Activated T-helper 1 cell treated with anti-CD3 and anti-CD28 coated beads, Interleukin-12 subunit alpha, Interleukin-12 subunit beta, Interleukin-2, Interleukin-4 antibody, amounts not matched to agents 30 ng/mL and 10 ng/mL and 1 ng/mL, durations not matched to agents 14 hours and 24 hours and 36 hours (primary cell): ENCODE measurements at regions of chr13 and their contacts with region 1.

Region 1: GRCh38 chr13:41456768-41457588 is at the start of gene RGCC:
- DNase-seq: peak; percentile 87
- H3K4me3 Mint-ChIP-seq: peak within 1 kb of the TSS; percentile 95
- H3K27ac Mint-ChIP-seq: peak within 1 kb of the TSS; percentile 96
- H3K4me1 Mint-ChIP-seq: peaks cover 44% of the 10 kb centered on the region
- H3K27me3 Mint-ChIP-seq: peaks cover 22% of the 10 kb centered on the region
- total RNA-seq, gene RGCC: 135 and 139 TPM in 2 replicates

Region 2: GRCh38 chr13:40706439-40706838 is 750.5 kb before region 1 on chr13:
- intact Hi-C with region 1: no loop called
- DNase-seq: no peak
- H3K4me3 Mint-ChIP-seq: no peak overlapping the region
- H3K27ac Mint-ChIP-seq: no peak overlapping the region
- H3K4me1 Mint-ChIP-seq: peaks cover 13% of the 10 kb centered on the region
- H3K27me3 Mint-ChIP-seq: no peaks in the 10 kb centered on the region

Region 3: DNA sequence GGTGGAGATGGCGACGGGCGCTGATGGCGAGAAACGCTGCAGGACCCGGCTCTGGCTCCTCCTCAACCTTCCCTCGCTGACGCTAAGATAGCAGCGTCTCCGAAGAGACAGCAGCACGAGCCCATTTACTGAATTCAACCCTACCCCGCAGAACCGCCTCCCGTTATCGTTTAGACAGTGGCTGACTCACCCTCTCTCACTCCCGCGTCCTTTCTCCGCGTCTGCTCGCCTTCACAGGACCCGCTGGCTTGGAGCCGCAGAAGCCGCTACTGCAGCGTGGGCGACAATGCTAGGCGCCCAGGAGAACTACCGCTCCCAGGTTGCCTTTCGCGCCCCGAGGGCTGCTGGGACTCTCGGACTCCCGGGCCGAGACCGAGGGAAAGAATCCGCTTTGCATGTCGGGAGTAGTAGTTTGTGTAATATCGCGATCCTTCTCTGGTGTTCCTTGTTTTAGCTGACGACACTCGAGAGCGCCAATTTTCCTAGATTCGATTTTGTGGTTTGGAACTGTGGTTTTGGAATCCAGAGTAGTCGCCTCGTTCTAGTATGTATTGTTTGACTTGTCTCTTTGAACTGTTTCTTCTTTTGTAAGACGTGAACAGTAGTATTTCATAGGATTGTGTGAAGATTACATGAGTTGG is 324.3 kb before region 1 on chr13 and contains the start of gene KBTBD6:
- intact Hi-C with region 1: loop called (anchors 5 kb)
- DNase-seq: peak; percentile 92
- H3K4me3 Mint-ChIP-seq: peak within 1 kb of the TSS; percentile 92
- H3K27ac Mint-ChIP-seq: peak within 1 kb of the TSS; percentile 93
- H3K4me1 Mint-ChIP-seq: peaks cover 45% of the 10 kb centered on the region
- H3K27me3 Mint-ChIP-seq: peaks cover 3% of the 10 kb centered on the region
- total RNA-seq, gene KBTBD6: 6.6 and 6.8 TPM in 2 replicates

Region 4: DNA sequence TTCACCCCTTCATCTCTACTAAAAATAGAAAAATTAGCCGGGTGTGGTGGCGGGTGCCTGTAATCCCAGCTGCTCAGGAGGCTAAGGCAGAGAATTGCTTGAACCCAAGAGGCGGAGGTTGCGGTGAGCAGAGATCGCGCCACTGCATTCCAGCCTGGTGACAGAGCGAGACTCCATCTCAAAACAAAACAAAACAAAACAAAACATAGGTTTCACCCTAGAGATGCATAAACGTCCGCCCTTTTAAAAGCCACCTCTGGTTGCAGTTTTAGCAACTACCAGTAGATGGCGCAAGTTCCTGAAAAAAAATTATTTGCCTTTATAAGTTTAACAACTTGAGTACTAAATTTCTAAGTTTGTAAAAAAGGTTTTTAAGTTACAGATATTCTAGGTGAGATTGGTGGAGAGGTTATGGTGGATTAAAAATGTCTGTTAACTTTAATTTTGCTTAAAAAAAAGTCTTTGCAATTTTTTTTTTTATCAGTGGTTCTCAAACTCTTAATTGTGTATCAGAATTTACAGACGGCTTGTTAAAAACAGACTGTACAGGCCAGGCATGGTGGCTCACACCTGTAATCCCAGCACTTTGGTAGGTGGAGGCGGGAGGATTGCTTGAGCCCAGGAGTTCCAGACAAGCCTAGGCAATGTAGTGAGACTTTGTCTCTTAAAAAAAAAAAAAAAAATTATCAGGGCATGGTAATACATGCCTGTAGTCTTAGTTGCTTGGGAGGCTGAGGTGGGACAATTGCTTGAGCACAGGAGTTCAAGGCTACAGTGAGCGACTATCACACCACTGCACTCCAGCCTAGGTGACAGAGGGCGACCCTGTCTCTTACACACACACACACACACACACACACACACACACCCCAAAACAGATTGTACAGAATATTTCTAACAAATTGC is 103.8 kb before region 1 on chr13:
- intact Hi-C with region 1: loop called (anchors 1 kb)
- DNase-seq: peak; percentile 47
- H3K4me3 Mint-ChIP-seq: no peak overlapping the region
- H3K27ac Mint-ChIP-seq: peak overlapping the region; percentile 24
- H3K4me1 Mint-ChIP-seq: peaks cover 38% of the 10 kb centered on the region
- H3K27me3 Mint-ChIP-seq: no peaks in the 10 kb centered on the region

Region 5: GRCh38 chr13:41428155-41428554 is 28.8 kb before region 1 on chr13:
- intact Hi-C with region 1: loop called (anchors 2 kb)
- DNase-seq: no peak
- H3K4me3 Mint-ChIP-seq: no peak overlapping the region
- H3K27ac Mint-ChIP-seq: no peak overlapping the region
- H3K4me1 Mint-ChIP-seq: peaks cover 14% of the 10 kb centered on the region
- H3K27me3 Mint-ChIP-seq: peaks cover 7% of the 10 kb centered on the region

Region 6: GRCh38 chr13:41596190-41596589 is 139.2 kb after region 1 on chr13:
- intact Hi-C with region 1: loop called (anchors 5 kb)
- DNase-seq: no peak
- H3K4me3 Mint-ChIP-seq: no peak overlapping the region
- H3K27ac Mint-ChIP-seq: no peak overlapping the region
- H3K4me1 Mint-ChIP-seq: peaks cover 5% of the 10 kb centered on the region
- H3K27me3 Mint-ChIP-seq: no peaks in the 10 kb centered on the region

Region 7: DNA sequence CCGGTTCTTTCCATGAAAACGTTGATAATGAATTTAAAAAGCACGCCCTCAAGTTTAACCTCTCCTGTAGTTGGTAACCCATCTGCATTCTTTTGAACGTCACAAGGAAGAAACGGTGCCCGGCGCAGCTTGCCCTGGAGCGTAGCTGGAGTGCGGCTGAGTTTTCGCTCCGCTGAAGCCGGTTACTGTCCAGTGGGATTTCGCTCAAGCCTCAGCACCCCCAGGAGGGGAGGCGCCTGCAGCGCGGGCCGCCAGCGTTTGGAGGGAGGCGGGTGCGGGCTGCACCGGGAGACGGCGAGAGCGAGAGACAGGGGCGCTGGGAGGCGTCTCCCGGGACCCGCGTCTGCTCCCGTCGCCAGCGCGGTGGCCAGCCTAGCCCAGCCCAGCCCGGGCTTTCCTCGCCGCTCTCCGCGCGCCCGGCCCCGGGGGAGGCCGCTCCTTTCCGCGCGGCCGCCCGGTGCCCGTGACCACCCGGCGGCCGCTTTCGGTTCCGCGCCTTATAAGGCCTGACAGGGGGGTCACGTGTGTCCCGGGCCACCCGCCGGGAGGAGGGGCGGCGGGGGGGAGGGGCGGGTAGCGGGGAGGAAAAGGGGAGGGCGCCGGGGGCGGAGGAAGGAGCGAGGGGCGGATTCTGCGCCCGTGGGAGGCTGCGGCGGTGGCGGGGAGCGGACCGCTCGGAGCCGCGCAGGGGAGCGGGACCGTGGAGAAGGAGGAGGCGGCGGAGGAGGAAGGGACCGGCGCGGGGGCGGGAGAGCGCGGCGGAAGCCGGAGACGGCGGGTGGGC is 583.2 kb after region 1 on chr13:
- intact Hi-C with region 1: loop called (anchors 2 kb)
- DNase-seq: peak; percentile 80
- H3K4me3 Mint-ChIP-seq: peak overlapping the region; percentile 87
- H3K27ac Mint-ChIP-seq: peak overlapping the region; percentile 56
- H3K4me1 Mint-ChIP-seq: peaks cover 17% of the 10 kb centered on the region
- H3K27me3 Mint-ChIP-seq: peaks cover 44% of the 10 kb centered on the region